ENCODE measurements at regions of chr4 and their contacts with region 1.

Region 1: DNA sequence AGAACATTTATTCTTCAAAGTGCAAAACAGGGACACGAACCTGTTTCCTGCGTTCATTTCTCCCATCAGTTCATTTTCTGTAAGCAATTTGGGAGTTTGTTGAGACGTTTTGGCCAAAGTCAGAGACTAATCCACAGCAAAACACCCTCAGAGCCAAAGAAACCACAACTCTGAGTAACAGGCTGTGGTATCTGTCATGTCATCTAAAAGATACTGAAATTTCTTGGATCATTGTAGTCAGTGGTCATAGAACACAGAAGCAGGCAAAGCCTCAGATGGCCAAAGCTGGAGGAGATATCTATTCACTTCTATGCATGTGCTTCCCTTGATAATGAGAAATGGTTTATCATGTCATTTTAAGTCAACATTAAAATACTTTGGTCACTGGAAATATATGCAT is 485.6 kb upstream of the GALNT7 start:
- DNase-seq: no peak
- CTCF ChIP-seq: no peak

Region 2: GRCh38 chr4:172648471-172648870 is 34.5 kb before region 1 on chr4:
- CTCF ChIA-PET with region 1: no interaction called
- POLR2A ChIA-PET with region 1: no interaction called
- DNase-seq: no peak
- CTCF ChIP-seq: no peak

Region 3: GRCh38 chr4:172666711-172667368 is 16.2 kb before region 1 on chr4:
- CTCF ChIA-PET with region 1: interaction called, 13 read pairs
- POLR2A ChIA-PET with region 1: no interaction called
- DNase-seq: no peak
- CTCF ChIP-seq: no peak

Region 4: DNA sequence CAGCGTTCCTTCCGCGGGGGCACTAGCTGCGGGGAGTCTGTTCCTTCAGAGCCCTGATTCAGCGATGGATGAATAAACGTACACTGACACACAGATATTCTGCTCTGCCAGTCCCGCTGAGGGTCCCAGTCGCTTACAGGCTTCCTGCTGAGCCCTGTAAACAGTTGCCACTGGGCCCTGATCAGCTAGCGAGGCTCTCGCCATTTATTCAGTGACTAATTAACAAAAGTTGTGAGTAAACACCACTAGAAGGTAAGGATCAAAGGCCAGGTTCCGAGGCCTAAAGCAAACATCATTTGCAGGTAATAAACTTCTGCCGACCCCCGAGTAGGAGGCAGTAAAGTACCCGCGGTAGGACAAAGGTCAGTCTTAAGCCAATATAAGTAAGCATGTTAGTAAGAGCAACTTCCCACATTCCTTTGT is 43.0 kb after region 1 on chr4:
- CTCF ChIA-PET with region 1: no interaction called
- POLR2A ChIA-PET with region 1: no interaction called
- DNase-seq: no peak
- CTCF ChIP-seq: no peak